Activated naive CD4-positive, alpha-beta T cell treated with anti-CD3 and anti-CD28 coated beads for 36 hours (primary cell): ENCODE measurements at regions of chr2 and their contacts with region 1.

Region 1: DNA sequence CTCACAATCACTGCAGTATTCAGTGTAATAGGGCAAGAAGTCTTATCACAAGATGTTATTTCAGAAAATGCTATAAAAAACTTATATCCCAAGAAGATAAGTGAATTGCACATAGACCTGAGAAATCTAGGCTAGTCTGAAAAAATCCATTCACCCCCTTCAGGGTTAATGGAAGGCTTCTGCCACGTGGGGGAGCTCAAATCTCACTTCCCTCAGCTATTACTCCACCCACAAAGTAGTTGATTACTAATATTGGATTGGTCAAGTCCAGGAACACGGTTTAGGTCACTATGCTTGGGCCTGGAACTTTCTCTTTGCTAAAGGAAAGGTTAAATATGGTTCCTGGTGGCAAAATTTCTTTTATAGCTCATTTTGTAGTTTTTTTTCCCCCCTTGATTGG is 51.2 kb upstream of the ADAM23 start:
- DNase-seq: peak; percentile 57
- H3K4me3 Mint-ChIP-seq: no peak overlapping the region
- H3K27ac Mint-ChIP-seq: no peak overlapping the region
- H3K4me1 Mint-ChIP-seq: no peaks in the 10 kb centered on the region
- H3K27me3 Mint-ChIP-seq: no peaks in the 10 kb centered on the region

Region 2: DNA sequence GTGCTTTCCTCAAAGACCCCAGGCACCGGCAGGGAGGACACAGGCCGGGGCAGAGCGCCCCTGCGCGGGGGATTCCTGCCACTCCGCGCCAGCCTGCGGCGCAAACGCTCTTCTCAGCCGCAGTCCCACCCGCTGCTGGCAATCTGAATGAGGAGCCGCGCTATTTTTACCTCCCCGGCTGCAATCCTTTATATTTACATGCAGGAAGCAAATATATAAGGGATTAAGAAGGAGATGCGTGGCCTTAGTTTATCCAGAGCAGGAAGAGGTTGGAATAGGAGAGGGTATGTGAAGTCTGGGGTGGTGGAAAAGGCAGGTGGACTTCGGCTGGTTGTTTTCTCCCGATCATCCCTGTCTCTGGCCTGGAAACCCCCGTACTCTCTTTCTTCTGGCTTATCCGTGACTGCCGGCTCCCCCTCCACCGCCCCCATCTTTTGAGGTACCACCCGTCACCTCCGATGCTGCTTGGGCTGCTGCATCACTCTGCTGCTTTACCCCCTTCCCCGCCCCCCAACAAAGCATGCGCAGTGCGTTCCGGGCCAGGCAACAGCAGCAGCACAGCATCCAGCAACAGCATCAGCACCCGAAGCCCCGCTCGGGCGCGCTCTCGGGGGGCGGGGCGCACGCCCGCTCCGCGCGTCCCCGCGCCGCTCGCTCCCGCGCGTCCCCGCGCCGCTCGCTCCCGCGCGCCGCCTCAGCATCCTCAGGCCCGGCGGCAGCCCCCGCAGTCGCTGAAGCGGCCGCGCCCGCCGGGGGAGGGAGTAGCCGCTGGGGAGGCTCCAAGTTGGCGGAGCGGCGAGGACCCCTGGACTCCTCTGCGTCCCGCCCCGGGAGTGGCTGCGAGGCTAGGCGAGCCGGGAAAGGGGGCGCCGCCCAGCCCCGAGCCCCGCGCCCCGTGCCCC is 51.0 kb after region 1 on chr2 and contains the start of gene ADAM23:
- CTCF ChIA-PET with region 1: no interaction called
- intact Hi-C with region 1: no loop called
- DNase-seq: peak; percentile 42
- H3K4me3 Mint-ChIP-seq: peak within 1 kb of the TSS; percentile 76
- H3K27ac Mint-ChIP-seq: no peak within 1 kb of the TSS
- H3K4me1 Mint-ChIP-seq: peaks cover 13% of the 10 kb centered on the region
- H3K27me3 Mint-ChIP-seq: peaks cover 59% of the 10 kb centered on the region
- total RNA-seq, gene ADAM23: 0.10 to 0.42 TPM

Region 3: GRCh38 chr2:206457188-206457634 is 65.1 kb after region 1 on chr2:
- CTCF ChIA-PET with region 1: no interaction called
- intact Hi-C with region 1: no loop called
- DNase-seq: no peak
- H3K4me3 Mint-ChIP-seq: no peak overlapping the region
- H3K27ac Mint-ChIP-seq: no peak overlapping the region
- H3K4me1 Mint-ChIP-seq: no peaks in the 10 kb centered on the region
- H3K27me3 Mint-ChIP-seq: peaks cover 30% of the 10 kb centered on the region

Region 4: DNA sequence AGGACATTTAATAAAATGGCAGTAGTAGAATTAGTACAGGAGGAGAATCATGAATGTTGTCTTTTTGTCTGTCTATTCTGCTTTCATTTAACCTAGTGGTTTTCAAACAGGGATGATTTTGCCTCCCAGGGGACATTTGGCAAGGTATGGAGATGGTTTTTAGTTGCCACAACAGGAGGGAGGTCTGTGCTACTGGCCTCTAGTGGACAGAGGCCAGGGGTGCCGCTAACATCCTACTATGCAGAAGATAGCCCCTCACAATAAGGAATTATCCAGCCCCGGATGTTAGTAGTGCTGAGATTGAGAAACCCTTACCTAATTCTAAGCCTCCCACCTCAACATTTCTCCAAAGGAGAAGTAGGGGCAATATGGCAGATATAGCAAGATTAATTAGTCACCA is 391.6 kb after region 1 on chr2:
- CTCF ChIA-PET with region 1: interaction called, 5 read pairs
- intact Hi-C with region 1: loop called (anchors 5 kb)
- DNase-seq: no peak
- H3K4me3 Mint-ChIP-seq: no peak overlapping the region
- H3K27ac Mint-ChIP-seq: no peak overlapping the region
- H3K4me1 Mint-ChIP-seq: peaks cover 25% of the 10 kb centered on the region
- H3K27me3 Mint-ChIP-seq: no peaks in the 10 kb centered on the region